ENCODE measurements at regions of chr2 and their contacts with region 1.

Region 1: DNA sequence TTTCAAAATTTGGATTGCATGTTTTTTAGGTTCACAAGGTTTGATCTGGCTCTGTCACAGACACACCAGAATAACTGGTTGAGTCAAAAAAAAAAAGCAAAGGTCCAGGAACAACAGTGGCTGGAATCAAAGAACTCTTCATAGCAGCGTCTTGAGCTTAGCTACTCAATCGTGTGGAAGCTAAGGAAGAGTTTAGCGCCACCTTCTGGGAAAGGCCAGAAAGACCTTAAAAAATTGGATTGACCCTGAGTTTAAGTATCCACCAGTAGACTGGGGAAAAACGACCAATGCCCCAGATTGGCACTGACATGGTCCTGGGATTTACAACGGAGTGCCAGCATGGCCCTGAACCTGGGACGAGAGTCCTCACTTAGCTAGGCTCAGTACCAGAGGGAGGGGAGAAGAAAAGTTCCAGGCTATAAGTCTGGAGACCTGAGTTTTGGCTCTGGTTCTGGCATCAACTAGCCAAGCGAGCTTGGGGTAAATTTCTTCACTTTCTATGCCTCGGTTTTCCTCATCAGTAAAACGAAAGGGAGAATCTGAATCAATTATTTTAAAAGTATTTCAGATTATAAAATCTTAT is 71.1 kb upstream of the TFCP2L1 start:
- DNase-seq: peak; percentile 59 to 72
- H3K4me3 ChIP-seq: no peak overlapping the region
- H3K4me3 Mint-ChIP-seq: no peak overlapping the region
- H3K27ac Mint-ChIP-seq: no peak overlapping the region
- H3K4me1 ChIP-seq: 0 out of 2 replicates have a peak, but pooled peaks cover 6% of the 10 kb centered on the region
- H3K4me1 Mint-ChIP-seq: peaks cover 17% of the 10 kb centered on the region
- H3K27me3 ChIP-seq: no peaks in the 10 kb centered on the region
- H3K27me3 Mint-ChIP-seq: no peaks in the 10 kb centered on the region
- CTCF ChIP-seq: peak; percentile 66 to 77

Region 2: DNA sequence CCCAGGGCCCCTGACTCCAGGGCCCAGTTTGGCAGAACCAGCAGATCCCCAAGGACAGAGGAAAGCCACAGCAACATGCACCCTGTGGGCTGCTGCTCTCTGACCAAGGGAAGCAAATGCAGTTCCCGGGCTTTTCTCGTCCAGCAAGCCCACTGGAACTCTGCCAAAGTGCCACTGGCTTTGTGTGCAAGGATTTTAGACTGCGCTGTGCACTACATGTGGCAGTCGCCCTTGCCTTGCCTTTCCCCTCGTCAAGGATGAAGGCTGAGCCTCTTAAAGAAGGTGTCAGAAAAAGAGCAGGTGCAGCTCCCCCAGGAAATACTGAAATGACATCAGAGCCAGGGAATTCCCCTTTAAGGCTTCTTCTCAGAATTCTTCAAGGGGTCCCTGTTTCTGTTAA is 270.3 kb before region 1 on chr2:
- CTCF ChIA-PET with region 1: interaction called, 27 read pairs
- POLR2A ChIA-PET with region 1: no interaction called
- intact Hi-C with region 1: loop called (anchors 1 kb)
- DNase-seq: no peak
- H3K4me3 ChIP-seq: no peak overlapping the region
- H3K4me3 Mint-ChIP-seq: no peak overlapping the region
- H3K27ac Mint-ChIP-seq: no peak overlapping the region
- H3K4me1 ChIP-seq: no peaks in the 10 kb centered on the region
- H3K4me1 Mint-ChIP-seq: no peaks in the 10 kb centered on the region
- H3K27me3 ChIP-seq: no peaks in the 10 kb centered on the region
- H3K27me3 Mint-ChIP-seq: no peaks in the 10 kb centered on the region
- CTCF ChIP-seq: no peak

Region 3: GRCh38 chr2:121095257-121096080 is 260.7 kb before region 1 on chr2:
- CTCF ChIA-PET with region 1: interaction called, 48 read pairs
- POLR2A ChIA-PET with region 1: no interaction called
- intact Hi-C with region 1: loop called (anchors 2 kb)
- DNase-seq: peak; percentile 57 to 75
- H3K4me3 ChIP-seq: no peak overlapping the region
- H3K4me3 Mint-ChIP-seq: no peak overlapping the region
- H3K27ac Mint-ChIP-seq: no peak overlapping the region
- H3K4me1 ChIP-seq: peaks cover 5% of the 10 kb centered on the region; the same call in 1 of the 2 replicates
- H3K4me1 Mint-ChIP-seq: peaks cover 7% of the 10 kb centered on the region
- H3K27me3 ChIP-seq: no peaks in the 10 kb centered on the region
- H3K27me3 Mint-ChIP-seq: no peaks in the 10 kb centered on the region
- CTCF ChIP-seq: peak; percentile 55 to 74

Region 4: GRCh38 chr2:121185571-121186074 is 170.5 kb before region 1 on chr2:
- CTCF ChIA-PET with region 1: interaction called, 4 read pairs
- POLR2A ChIA-PET with region 1: no interaction called
- intact Hi-C with region 1: loop called (anchors 10 kb)
- DNase-seq: no peak
- H3K4me3 ChIP-seq: no peak overlapping the region
- H3K4me3 Mint-ChIP-seq: no peak overlapping the region
- H3K27ac Mint-ChIP-seq: no peak overlapping the region
- H3K4me1 ChIP-seq: no peaks in the 10 kb centered on the region
- H3K4me1 Mint-ChIP-seq: no peaks in the 10 kb centered on the region
- H3K27me3 ChIP-seq: no peaks in the 10 kb centered on the region
- H3K27me3 Mint-ChIP-seq: no peaks in the 10 kb centered on the region
- CTCF ChIP-seq: no peak

Region 5: DNA sequence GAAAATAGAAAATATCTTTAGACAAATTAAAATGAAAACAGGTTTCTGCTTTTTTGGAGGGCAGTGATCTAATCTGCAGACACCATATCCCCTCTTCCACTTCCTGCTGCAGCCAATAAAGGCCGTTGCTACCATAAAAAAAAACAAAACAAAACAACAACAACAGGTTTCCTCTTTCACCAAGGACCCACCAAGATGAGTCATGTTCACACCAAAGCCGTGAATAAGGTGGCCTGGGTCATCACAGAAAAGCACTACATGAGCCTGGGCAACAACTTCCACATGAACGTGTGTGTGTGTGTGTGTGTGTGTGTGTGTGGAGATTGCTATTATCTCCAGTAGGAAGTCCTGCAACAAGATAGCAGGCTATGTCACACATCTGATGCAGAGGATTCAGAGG is 46.3 kb before region 1 on chr2:
- CTCF ChIA-PET with region 1: no interaction called
- POLR2A ChIA-PET with region 1: no interaction called
- intact Hi-C with region 1: no loop called
- DNase-seq: no peak
- H3K4me3 ChIP-seq: no peak overlapping the region
- H3K4me3 Mint-ChIP-seq: no peak overlapping the region
- H3K27ac Mint-ChIP-seq: no peak overlapping the region
- H3K4me1 ChIP-seq: no peaks in the 10 kb centered on the region
- H3K4me1 Mint-ChIP-seq: no peaks in the 10 kb centered on the region
- H3K27me3 ChIP-seq: no peaks in the 10 kb centered on the region; the same call in 1 of the 2 replicates
- H3K27me3 Mint-ChIP-seq: peaks cover 14% of the 10 kb centered on the region
- CTCF ChIP-seq: no peak

Region 6: DNA sequence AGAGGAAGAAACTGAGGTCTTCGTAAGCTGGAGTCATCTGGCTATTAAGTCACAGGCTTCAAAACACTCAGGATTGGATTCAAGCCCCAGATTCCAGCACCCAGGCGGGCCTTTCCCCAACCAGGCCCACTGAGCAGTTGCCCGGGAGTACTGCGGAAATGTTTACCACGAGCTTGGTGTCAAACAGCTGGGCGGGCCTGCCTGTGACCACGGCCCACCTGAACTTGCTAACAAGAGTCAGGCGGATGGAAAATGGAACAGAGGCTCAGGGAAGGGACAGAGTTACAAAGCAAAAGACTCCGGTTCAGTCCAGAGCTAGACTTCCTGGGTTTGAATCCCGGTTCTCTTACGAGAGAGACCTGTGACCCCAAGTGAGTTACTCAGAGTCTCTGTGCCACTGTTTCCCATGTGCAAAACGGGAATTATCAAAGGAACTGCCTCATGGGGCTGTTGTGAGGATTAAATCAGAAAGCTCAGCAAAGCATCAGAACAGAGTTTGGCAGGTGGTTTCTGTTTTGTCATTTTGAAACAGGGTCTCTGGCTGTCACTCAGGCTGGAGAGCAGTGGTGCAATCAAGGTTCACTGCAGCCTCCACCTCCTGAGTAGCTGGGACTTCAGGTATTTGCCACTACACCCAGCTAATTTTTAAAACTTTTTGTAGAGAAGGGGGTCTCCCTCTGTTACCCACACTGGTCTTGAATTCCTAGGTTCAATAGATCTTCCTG is 22.2 kb before region 1 on chr2:
- CTCF ChIA-PET with region 1: interaction called, 36 read pairs
- POLR2A ChIA-PET with region 1: no interaction called
- intact Hi-C with region 1: loop called (anchors 1 kb)
- DNase-seq: no peak
- H3K4me3 ChIP-seq: no peak overlapping the region
- H3K4me3 Mint-ChIP-seq: no peak overlapping the region
- H3K27ac Mint-ChIP-seq: peak overlapping the region; percentile 83
- H3K4me1 ChIP-seq: peaks cover 23% of the 10 kb centered on the region
- H3K4me1 Mint-ChIP-seq: peaks cover 14% of the 10 kb centered on the region
- H3K27me3 ChIP-seq: no peaks in the 10 kb centered on the region
- H3K27me3 Mint-ChIP-seq: no peaks in the 10 kb centered on the region
- CTCF ChIP-seq: no peak

Measured in Caco-2 (cell line).